ENCODE measurements at regions of chr20 and their contacts with region 1.

Region 1: DNA sequence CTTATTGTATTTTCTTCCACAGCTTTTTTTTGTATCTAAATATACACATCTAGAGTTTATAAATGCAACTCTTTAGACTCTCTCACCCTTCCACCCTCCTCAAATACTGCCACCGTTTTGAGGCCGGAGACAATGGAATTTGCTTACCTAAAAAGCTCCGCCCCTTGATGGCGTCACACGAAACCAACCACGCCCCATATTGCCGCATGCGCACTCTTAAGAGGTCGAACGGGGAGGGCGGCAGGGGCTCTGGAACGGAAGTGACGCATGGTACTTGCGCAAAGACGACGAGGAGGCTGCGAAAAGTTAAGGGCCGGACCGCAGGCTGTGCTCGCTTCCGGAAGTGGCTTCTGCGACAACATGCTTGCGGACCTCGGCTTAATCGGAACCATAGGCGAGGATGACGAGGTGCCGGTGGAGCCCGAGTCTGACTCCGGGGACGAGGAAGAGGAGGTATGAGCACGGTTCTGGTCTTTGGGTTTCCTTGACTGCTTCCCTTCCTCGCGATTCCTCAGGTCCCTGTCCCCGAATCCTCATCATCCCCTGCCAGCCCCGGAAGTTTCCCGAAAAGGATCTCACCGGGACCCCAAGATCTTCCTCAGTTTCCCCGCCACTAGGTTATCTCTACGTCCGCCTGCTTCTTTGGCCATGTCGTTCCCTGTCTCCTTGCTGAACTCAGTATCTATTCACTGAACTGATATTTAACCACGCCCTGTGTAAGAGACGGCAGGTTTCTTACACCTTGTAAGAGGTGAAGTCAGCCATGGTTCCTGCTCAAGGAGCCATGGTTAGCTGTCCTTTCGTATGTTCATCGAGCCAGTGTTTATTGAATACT is at the start of gene DDX27:
- DNase-seq: peak; percentile 99
- H3K4me3 ChIP-seq: peak within 1 kb of the TSS; percentile 49 to 100 (median 95)
- H3K27ac ChIP-seq: peak within 1 kb of the TSS; percentile 93 to 94
- H3K4me1 ChIP-seq: peaks cover 6 to 22% (median 19%) of the 10 kb centered on the region in 4 experiments
- H3K27me3 ChIP-seq: no peaks in the 10 kb centered on the region

Region 2: GRCh38 chr20:49006446-49006980 is 212.8 kb before region 1 on chr20:
- CTCF ChIA-PET with region 1: no interaction called
- POLR2A ChIA-PET with region 1: no interaction called
- DNase-seq: no peak
- H3K4me3 ChIP-seq: no peak overlapping the region
- H3K27ac ChIP-seq: no peak overlapping the region
- H3K4me1 ChIP-seq: no peaks in the 10 kb centered on the region
- H3K27me3 ChIP-seq: no peaks in the 10 kb centered on the region

Region 3: DNA sequence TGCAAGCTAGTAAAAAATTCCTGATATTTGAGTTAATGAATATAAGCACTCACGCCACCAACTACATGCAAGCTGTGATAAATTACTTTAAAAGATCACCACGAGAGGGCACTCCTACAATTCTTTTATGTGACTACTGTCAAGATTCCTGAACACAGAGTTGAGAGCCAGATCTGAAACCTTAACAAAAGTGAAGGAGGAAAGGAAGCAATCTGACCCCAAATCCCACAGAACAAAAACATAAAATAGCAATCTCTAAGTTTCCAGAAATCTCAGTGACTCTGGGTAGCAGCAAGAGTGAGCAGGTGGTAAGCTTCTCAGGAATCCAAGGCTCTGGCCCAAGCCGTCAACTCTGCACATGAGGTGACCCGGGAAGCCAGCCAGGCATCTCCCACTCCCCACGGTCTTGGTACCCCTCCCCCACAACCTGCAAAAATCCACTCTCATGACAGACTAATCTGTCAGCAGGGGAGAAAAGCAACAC is 86.3 kb before region 1 on chr20:
- CTCF ChIA-PET with region 1: interaction called, 104 read pairs
- POLR2A ChIA-PET with region 1: interaction called, 6 read pairs
- DNase-seq: peak; percentile 72 to 80 (median 73)
- H3K4me3 ChIP-seq: no peak overlapping the region
- H3K27ac ChIP-seq: no peak overlapping the region
- H3K4me1 ChIP-seq: no peaks in the 10 kb centered on the region
- H3K27me3 ChIP-seq: no peaks in the 10 kb centered on the region

Region 4: DNA sequence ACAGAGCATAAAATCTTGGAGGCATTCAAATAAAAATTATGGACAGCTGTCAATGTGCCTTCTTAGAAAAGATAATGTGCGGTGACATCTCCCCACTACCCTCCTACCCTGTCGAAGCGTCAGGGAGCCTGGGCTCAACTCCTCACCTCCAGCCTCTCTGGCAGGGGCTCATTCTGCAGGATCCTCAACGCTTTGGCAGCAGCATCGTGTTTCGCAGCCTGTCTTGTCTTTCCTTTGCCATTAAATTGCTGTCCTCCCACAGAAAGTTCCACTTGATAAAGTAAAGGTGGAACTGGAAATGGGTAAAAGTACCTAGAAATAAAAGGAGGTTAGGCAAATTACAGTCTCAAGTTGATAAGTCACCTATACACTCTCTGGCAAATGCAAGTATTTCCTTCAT is 67.9 kb before region 1 on chr20:
- CTCF ChIA-PET with region 1: interaction called, 10 read pairs
- POLR2A ChIA-PET with region 1: no interaction called
- DNase-seq: no peak
- H3K4me3 ChIP-seq: no peak overlapping the region
- H3K27ac ChIP-seq: no peak overlapping the region
- H3K4me1 ChIP-seq: no peaks in the 10 kb centered on the region
- H3K27me3 ChIP-seq: no peaks in the 10 kb centered on the region

Region 5: DNA sequence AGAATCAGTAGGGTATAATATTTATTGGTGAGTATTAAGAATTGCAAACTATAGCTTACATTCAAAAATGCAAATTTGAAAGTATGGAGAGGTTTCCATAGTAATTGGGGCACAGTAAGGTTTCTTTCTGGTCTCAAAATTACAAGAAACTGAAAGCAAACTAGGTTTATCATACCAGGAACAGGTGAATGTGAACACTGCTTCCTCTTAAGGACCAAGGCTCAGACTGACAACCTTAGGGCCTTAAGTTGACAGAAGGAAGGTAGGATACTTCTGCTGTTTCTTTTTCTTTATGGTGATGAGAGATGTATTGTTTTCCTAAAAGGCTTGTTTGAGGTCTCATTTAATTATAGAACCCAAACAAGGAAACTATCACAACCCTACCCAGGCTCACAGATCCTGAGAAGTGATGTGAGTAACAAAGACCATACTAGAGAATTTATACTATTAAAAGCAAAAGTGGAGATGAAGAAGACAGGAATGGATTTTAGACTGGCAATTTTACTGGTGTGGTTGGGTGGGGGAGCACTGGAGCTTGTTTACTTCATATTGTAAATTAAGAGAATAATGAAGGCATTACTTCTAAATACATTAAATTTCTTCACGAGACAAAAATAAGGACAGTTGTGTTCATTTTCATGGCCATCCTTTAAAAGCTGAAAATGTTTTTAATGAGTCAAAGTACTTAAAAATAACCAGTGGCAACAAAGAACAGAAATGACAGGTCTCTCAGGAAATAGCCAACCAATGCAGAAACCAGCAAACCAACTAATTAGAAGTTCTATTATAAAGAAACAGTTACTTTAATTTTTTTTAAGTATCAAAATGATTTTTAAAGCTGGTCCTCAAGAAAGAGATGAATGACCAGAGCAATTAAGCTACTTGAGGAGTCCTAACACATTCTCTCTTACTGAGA is 52.5 kb before region 1 on chr20:
- CTCF ChIA-PET with region 1: interaction called, 10 read pairs
- POLR2A ChIA-PET with region 1: no interaction called
- DNase-seq: peak in 2 of 3 donors; percentile 28 to 40
- H3K4me3 ChIP-seq: no peak overlapping the region
- H3K27ac ChIP-seq: peak overlapping the region in 1 of 2 experiments; percentile 25
- H3K4me1 ChIP-seq: peaks cover 0 to 18% (median 8%) of the 10 kb centered on the region in 4 experiments
- H3K27me3 ChIP-seq: no peaks in the 10 kb centered on the region

Region 6: DNA sequence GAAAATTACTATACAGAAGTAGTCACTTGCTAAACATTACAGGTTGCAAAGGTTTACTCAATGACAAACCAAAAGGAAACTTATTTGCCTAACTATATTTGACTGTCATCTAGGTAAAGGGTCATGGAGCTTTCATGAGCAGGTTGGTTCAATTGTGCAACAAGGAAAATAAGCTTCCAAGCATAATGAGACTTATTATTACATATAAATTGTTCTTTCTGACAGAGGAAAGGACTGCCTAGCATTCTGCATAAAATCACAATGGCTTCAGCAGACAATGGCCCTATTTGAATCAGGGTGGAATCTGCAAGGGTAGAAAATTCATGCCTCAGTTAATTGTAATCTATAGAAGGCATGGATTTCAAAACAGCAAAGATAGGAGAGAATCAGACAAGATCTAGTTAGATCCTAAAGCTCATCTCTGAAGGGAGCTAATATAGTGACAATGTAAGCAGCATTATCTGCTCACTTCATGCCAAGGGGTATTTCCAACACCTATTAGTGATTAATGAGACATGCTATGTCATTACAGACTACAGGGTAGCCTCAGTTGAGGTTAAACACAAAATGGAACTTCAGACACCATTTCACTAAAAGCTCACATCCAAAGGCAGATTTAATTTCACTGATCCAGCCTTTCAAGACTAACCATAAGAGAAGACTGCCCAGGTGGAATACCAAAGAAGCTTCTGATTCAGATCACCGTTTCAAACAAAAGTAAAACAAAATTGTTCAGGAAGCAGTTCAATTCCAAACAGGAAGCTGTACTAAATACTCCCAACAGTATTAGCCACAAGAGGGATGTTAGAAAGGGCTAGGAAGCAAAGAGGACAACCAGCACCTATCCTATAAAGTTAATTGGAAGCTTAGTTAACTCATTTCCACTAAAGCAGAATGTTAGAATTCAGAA is 39.7 kb before region 1 on chr20:
- CTCF ChIA-PET with region 1: interaction called, 21 read pairs
- POLR2A ChIA-PET with region 1: interaction called, 3 read pairs
- DNase-seq: peak in 2 of 3 donors; percentile 26 to 43
- H3K4me3 ChIP-seq: no peak overlapping the region
- H3K27ac ChIP-seq: peak overlapping the region in 1 of 2 experiments; percentile 4
- H3K4me1 ChIP-seq: peaks cover 8 to 14% (median 13%) of the 10 kb centered on the region in 4 experiments
- H3K27me3 ChIP-seq: no peaks in the 10 kb centered on the region

Region 7: GRCh38 chr20:49186535-49187329 is 32.6 kb before region 1 on chr20:
- CTCF ChIA-PET with region 1: interaction called, 21 read pairs
- POLR2A ChIA-PET with region 1: interaction called, 4 read pairs
- DNase-seq: peak; percentile 53 to 79 (median 68)
- H3K4me3 ChIP-seq: peak overlapping the region; percentile 80 to 98 (median 84)
- H3K27ac ChIP-seq: peak overlapping the region; percentile 64 to 85
- H3K4me1 ChIP-seq: peaks cover 4 to 21% (median 16%) of the 10 kb centered on the region in 4 experiments
- H3K27me3 ChIP-seq: no peaks in the 10 kb centered on the region

Region 8: GRCh38 chr20:49207076-49207475 is 12.2 kb before region 1 on chr20:
- CTCF ChIA-PET with region 1: interaction called, 10 read pairs
- POLR2A ChIA-PET with region 1: no interaction called
- DNase-seq: peak in 2 of 3 donors; percentile 31 to 34
- H3K4me3 ChIP-seq: no peak overlapping the region
- H3K27ac ChIP-seq: no peak overlapping the region
- H3K4me1 ChIP-seq: no peaks in the 10 kb centered on the region
- H3K27me3 ChIP-seq: no peaks in the 10 kb centered on the region